H1 (cell line): ENCODE measurements at regions of chr15 and their contacts with region 1.

Region 1: DNA sequence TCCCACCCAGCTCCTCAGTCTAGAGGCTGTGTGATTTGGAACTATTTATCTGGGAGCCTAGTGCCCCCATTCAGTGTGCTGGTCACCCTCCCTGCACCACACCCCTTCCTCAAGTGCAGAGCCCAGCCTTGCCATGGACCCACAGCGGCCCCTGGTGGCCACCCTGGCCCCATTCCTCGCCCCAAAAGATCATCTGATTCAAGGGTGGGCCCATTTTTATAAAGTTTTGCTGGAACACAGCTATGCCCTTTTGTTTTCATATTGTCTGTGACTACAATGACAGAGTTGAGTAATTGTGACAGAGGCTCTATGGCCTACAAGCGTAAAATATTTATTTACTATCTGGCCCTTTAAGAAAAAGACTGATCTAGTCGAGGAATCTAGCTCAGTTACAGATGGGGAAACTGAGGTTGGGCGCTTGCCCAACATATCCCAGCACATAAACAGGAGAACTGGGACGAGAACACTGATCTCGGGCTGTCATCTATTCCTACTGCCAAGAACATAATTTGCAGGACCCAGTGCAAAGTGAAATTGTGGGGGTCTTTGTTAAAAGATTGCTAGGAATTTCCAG is 1.8 kb downstream of the FES start:
- DNase-seq: peak in 1 of 2 experiments; percentile 96
- H3K4me3 ChIP-seq: no peak overlapping the region
- H3K27ac ChIP-seq: no peak overlapping the region
- H3K4me1 ChIP-seq: peaks cover 0 to 24% (median 15%) of the 10 kb centered on the region in 4 experiments; a peak in 6 of 7 replicates
- H3K27me3 ChIP-seq: no peaks in the 10 kb centered on the region
- CTCF ChIP-seq: peak in 2 of 3 experiments; percentile 91; a peak in 3 of 4 replicates
- EP300 ChIP-seq: 0 out of 3 replicates have a peak, but pooled peaks of 1 of the 2 experiments have one; percentile 29
- POLR2A ChIP-seq: no peak
- RAD21 ChIP-seq: peak; percentile 99

Region 2: DNA sequence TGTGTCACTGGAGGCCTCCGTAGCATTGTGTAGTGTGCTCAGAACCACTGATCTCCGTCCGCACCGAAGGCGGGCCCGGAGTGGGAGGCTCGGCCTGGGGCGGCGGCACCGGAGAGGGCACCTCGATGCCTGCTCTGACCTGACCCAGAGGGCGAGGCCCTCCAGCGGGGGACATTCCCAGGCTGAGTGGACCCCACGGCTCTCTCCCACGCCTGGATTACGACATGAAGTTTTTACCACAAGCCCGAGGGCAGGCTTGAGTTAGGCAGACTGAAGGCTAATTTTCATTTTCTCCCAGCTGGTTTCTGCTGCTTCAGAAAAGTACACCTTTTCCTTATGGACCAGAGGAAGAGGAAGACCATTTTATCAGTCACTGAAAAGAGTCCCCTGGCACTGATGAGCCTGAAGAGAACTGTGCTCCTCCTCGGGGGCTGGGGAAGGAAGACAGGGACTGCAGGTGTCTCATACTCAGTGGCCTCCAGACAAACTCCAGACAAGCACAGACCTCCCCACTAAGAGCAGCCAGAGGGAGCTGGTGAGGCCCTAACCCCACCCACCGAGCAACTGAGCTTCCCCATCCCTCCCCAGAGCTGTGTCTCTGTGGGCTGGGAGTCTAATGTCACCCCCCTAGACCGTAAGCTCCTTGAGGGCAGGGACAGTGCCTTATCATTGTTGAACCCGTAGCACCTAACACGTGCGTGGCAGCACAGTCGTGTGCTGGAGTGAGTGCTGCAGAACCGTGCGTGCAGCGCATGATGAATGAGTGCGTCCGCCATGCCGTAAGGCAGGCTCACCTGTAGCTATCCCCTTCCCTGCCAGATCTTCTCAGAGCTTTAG is 243.4 kb before region 1 on chr15:
- CTCF ChIA-PET with region 1: interaction called, 19 read pairs
- POLR2A ChIA-PET with region 1: no interaction called
- DNase-seq: no peak
- H3K4me3 ChIP-seq: no peak overlapping the region
- H3K27ac ChIP-seq: no peak overlapping the region
- H3K4me1 ChIP-seq: peaks cover 0 to 6% (median 0%) of the 10 kb centered on the region in 4 experiments; a peak in 4 of 7 replicates
- H3K27me3 ChIP-seq: no peaks in the 10 kb centered on the region; a peak in 1 of 7 replicates
- CTCF ChIP-seq: peak; percentile 21 to 55 (median 48); a peak in 3 of 4 replicates
- EP300 ChIP-seq: no peak
- POLR2A ChIP-seq: no peak
- RAD21 ChIP-seq: peak; percentile 15 to 30; a peak in 2 of 4 replicates

Region 3: DNA sequence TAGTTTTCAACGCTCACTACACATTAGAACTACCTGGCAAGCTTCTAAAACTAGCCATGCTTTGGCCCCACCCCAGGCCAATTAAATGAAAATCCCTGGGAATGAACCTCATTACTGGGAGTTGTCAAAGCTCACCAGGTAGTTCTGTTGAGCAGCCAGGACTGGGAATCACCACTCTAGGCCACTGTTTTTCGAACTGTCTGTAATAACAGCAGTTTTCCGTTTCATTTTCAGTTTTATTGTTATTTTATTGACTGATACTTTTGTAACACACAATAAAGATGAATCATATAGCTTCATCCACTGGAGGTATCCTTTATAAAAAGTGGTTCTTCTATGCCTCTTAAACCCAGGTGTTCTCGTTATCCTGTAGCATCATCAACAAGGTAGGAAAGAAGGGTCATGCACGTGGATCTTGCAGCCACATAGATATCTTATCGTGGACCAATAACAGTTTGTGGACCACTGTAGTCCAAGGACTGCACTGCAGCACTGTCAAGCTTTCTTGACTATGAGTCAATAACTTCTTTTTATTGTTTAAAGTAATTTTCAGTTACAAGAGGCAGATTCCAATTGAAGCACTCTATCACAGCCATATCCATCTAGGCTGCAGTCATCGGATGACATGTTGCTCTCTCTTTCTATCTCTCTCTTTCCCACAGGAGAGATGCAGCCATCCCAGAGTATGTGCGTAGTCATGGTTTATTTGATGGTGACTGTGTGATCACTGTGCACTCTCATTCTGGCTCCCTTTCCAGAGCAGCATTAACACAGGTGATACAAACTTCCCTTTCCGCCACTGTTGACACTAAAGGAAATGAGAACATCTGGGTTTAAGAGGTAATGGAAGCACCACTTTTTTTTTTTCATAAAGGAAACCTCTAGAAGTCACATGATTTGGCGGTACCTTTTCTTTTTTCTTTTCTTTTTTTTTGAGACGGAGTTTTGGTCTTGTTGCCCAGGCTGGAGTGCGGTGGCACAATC is 208.0 kb before region 1 on chr15:
- CTCF ChIA-PET with region 1: interaction called, 14 read pairs
- POLR2A ChIA-PET with region 1: no interaction called
- DNase-seq: no peak
- H3K4me3 ChIP-seq: no peak overlapping the region
- H3K27ac ChIP-seq: no peak overlapping the region
- H3K4me1 ChIP-seq: no peaks in the 10 kb centered on the region
- H3K27me3 ChIP-seq: no peaks in the 10 kb centered on the region
- CTCF ChIP-seq: no peak
- EP300 ChIP-seq: no peak
- POLR2A ChIP-seq: no peak
- RAD21 ChIP-seq: no peak

Region 4: GRCh38 chr15:90789462-90789861 is 96.7 kb before region 1 on chr15:
- CTCF ChIA-PET with region 1: interaction called, 17 read pairs
- POLR2A ChIA-PET with region 1: no interaction called
- DNase-seq: no peak
- H3K4me3 ChIP-seq: no peak overlapping the region
- H3K27ac ChIP-seq: no peak overlapping the region
- H3K4me1 ChIP-seq: no peaks in the 10 kb centered on the region
- H3K27me3 ChIP-seq: no peaks in the 10 kb centered on the region
- CTCF ChIP-seq: no peak
- EP300 ChIP-seq: no peak
- POLR2A ChIP-seq: no peak
- RAD21 ChIP-seq: no peak

Region 5: GRCh38 chr15:90829942-90830440 is 56.1 kb before region 1 on chr15:
- CTCF ChIA-PET with region 1: interaction called, 54 read pairs
- POLR2A ChIA-PET with region 1: no interaction called
- DNase-seq: no peak
- H3K4me3 ChIP-seq: no peak overlapping the region
- H3K27ac ChIP-seq: no peak overlapping the region
- H3K4me1 ChIP-seq: no peaks in the 10 kb centered on the region; a peak in 1 of 7 replicates
- H3K27me3 ChIP-seq: no peaks in the 10 kb centered on the region; a peak in 1 of 7 replicates
- CTCF ChIP-seq: no peak
- EP300 ChIP-seq: no peak
- POLR2A ChIP-seq: no peak
- RAD21 ChIP-seq: no peak

Region 6: DNA sequence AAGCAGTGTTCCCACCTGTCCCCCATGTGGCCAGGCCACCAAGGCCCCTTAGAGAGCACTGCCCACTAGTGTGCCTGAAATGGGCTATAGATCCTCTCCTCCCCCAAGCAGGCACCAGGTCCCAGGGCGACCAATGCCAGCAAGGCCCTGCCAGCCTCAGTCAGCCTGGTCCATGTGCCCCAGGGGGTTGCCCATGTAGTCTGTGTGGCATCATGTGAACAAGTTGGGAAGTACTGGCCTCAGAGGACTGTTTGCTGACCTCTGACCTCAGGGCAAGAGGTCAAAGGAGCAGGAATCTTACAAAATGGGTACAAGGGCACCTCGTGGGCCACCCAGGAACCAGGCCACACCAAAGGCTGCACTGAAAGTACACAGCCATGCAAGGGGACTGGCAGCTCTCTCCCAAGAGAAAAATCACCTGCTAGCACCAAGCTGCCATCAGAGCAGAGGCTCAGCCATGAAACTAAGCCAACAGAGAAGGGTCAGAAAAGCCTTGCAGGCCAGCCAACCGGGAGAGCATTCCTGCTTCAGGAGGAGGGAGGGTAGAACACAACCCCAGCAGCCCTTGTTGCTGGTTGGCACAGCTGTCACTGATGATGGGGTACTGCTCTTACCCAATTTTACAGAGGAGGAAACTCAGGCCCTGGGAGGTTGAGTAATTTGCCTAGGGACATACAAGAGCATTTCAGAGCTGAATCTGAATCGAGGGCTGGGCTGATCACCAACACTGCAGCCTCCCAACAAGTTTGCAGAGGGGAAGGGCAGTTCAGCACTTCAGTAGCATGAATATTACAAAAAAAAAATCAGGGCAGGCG is 23.0 kb before region 1 on chr15:
- CTCF ChIA-PET with region 1: interaction called, 23 read pairs
- POLR2A ChIA-PET with region 1: interaction called, 11 read pairs
- DNase-seq: no peak
- H3K4me3 ChIP-seq: no peak overlapping the region
- H3K27ac ChIP-seq: no peak overlapping the region
- H3K4me1 ChIP-seq: peaks cover 0 to 10% (median 6%) of the 10 kb centered on the region in 4 experiments; a peak in 6 of 7 replicates
- H3K27me3 ChIP-seq: no peaks in the 10 kb centered on the region
- CTCF ChIP-seq: no peak
- EP300 ChIP-seq: no peak
- POLR2A ChIP-seq: no peak
- RAD21 ChIP-seq: no peak

Region 7: GRCh38 chr15:90931737-90932659 is 45.9 kb after region 1 on chr15 and contains the start of gene HDDC3:
- CTCF ChIA-PET with region 1: interaction called, 72 read pairs
- POLR2A ChIA-PET with region 1: interaction called, 4 read pairs
- DNase-seq: peak in 1 of 2 experiments; percentile 99
- H3K4me3 ChIP-seq: peak within 1 kb of the TSS; percentile 58 to 83 (median 76)
- H3K27ac ChIP-seq: peak within 1 kb of the TSS; percentile 39; the same call in 1 of the 2 replicates
- H3K4me1 ChIP-seq: peaks cover 0 to 13% (median 7%) of the 10 kb centered on the region in 4 experiments; a peak in 6 of 7 replicates
- H3K27me3 ChIP-seq: 0 out of 7 replicates have a peak, but pooled peaks cover 0 to 4% (median 0%) of the 10 kb centered on the region in 4 experiments
- CTCF ChIP-seq: peak; percentile 82 to 96 (median 93)
- EP300 ChIP-seq: no peak
- POLR2A ChIP-seq: no peak; a peak in 1 of 3 replicates
- RAD21 ChIP-seq: peak; percentile 39 to 65
- total RNA-seq, gene HDDC3: 16.3 and 17.0 TPM in 2 replicates

Region 8: DNA sequence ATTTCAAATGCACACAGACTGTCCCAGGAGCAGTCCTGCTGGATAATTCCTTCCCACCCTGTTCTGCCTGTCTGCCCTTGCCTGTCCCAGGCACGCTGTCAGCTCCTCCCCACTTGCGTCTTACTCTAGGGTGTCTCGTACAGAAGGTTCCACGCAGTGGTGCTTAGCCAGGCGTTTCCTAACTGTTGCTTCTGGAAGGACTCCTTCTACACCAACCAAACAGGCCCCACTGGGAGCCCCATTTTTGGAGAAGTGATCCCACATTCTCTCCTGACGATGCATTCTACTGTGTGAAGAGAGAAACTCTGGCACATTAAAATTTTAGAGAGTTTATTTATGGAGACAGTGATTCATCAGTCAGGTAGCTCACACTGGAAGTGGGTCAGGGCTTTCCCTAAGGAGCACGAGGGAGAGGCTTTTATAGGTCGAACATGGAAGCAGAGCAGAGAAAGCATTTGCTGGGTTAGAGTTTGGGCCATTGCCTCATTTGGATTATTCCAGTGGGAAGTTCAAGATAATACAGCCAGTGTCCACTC is 377.9 kb after region 1 on chr15:
- CTCF ChIA-PET with region 1: no interaction called
- POLR2A ChIA-PET with region 1: no interaction called
- DNase-seq: no peak
- H3K4me3 ChIP-seq: no peak overlapping the region
- H3K27ac ChIP-seq: no peak overlapping the region
- H3K4me1 ChIP-seq: no peaks in the 10 kb centered on the region
- H3K27me3 ChIP-seq: peaks cover 0 to 3% (median 0%) of the 10 kb centered on the region in 4 experiments; a peak in 1 of 7 replicates
- CTCF ChIP-seq: no peak
- EP300 ChIP-seq: no peak
- POLR2A ChIP-seq: no peak
- RAD21 ChIP-seq: no peak